HAP-1 (cell line): ENCODE measurements at regions of chr7 and their contacts with region 1.

Region 1: GRCh38 chr7:107743567-107744344 is at the start of gene CBLL1:
- DNase-seq: peak; percentile 93 to 97
- H3K4me3 ChIP-seq: peak within 1 kb of the TSS; percentile 78
- H3K4me1 ChIP-seq: peaks cover 26% of the 10 kb centered on the region
- H3K27me3 ChIP-seq: no peaks in the 10 kb centered on the region

Region 2: GRCh38 chr7:107180378-107180777 is 563.4 kb before region 1 on chr7:
- in situ Hi-C with region 1: loop called (anchors 25 kb)
- DNase-seq: no peak
- H3K4me3 ChIP-seq: no peak overlapping the region
- H3K4me1 ChIP-seq: peaks cover 3% of the 10 kb centered on the region; the same call in 1 of the 2 replicates
- H3K27me3 ChIP-seq: no peaks in the 10 kb centered on the region

Region 3: DNA sequence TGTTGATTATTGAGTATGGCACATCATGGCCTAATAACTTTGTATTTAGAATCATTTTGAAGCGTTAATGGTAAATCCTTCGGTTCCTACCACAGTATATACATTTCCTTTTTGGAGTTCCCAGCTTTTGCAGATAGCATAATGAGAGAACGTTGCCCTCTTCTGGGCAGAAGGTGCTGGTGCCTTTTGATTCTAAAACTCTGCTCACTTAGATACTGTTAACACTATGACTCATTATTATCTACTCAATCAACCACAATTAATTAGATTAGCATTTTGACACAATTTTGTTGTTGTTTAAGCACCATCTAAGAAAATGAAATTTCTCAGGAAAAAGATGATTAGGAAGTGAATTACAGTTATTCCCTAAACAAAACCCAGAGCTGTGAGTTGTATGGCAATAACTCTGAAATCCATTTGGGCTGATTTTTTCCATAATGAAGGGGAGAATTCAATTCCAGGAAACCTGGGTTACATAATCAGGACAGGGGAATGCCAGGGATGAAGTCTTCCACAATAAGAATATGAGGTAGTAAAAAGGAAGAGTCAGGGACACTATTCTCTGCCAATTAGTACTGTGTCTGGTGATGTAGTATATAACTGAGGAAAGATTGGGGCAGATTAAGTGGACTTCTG is 135.8 kb after region 1 on chr7:
- in situ Hi-C with region 1: loop called (anchors 10 kb)
- DNase-seq: peak; percentile 54 to 66
- H3K4me3 ChIP-seq: no peak overlapping the region
- H3K4me1 ChIP-seq: no peaks in the 10 kb centered on the region
- H3K27me3 ChIP-seq: peaks cover 8% of the 10 kb centered on the region

Region 4: GRCh38 chr7:108146070-108146837 is 402.5 kb after region 1 on chr7:
- in situ Hi-C with region 1: loop called (anchors 25 kb)
- DNase-seq: peak; percentile 78 to 82
- H3K4me3 ChIP-seq: no peak overlapping the region
- H3K4me1 ChIP-seq: no peaks in the 10 kb centered on the region; the same call in 1 of the 2 replicates
- H3K27me3 ChIP-seq: peaks cover 11% of the 10 kb centered on the region; the same call in 1 of the 2 replicates